ENCODE measurements at regions of chr20 and their contacts with region 1.

Region 1: GRCh38 chr20:25247956-25248785 is at the start of gene PYGB:
- DNase-seq: peak in 1 of 2 experiments; percentile 41
- H3K4me3 ChIP-seq: peak within 1 kb of the TSS; percentile 73 to 83 (median 77)
- H3K27ac ChIP-seq: peak within 1 kb of the TSS; percentile 56; the same call in 1 of the 2 replicates
- H3K4me1 ChIP-seq: peaks cover 3 to 7% (median 4%) of the 10 kb centered on the region in 4 experiments; a peak in 6 of 7 replicates
- H3K27me3 ChIP-seq: peaks cover 0 to 8% (median 7%) of the 10 kb centered on the region in 4 experiments; a peak in 4 of 7 replicates
- CTCF ChIP-seq: no peak
- EP300 ChIP-seq: 0 out of 3 replicates have a peak, but pooled peaks of 1 of the 2 experiments have one; percentile 10
- POLR2A ChIP-seq: peak in 1 of 2 experiments; percentile 90; a peak in 2 of 3 replicates
- RAD21 ChIP-seq: no peak
- total RNA-seq, gene PYGB: 54.9 and 56.0 TPM in 2 replicates

Region 2: GRCh38 chr20:25120462-25120861 is 127.7 kb before region 1 on chr20:
- CTCF ChIA-PET with region 1: no interaction called
- POLR2A ChIA-PET with region 1: no interaction called
- DNase-seq: peak in 1 of 2 experiments; percentile 14
- H3K4me3 ChIP-seq: no peak overlapping the region
- H3K27ac ChIP-seq: no peak overlapping the region
- H3K4me1 ChIP-seq: no peaks in the 10 kb centered on the region
- H3K27me3 ChIP-seq: no peaks in the 10 kb centered on the region
- CTCF ChIP-seq: no peak
- EP300 ChIP-seq: no peak
- POLR2A ChIP-seq: no peak
- RAD21 ChIP-seq: no peak

Region 3: GRCh38 chr20:25198663-25199365 is 49.4 kb before region 1 on chr20:
- CTCF ChIA-PET with region 1: interaction called, 10 read pairs
- POLR2A ChIA-PET with region 1: interaction called, 3 read pairs
- DNase-seq: no peak
- H3K4me3 ChIP-seq: no peak overlapping the region
- H3K27ac ChIP-seq: no peak overlapping the region
- H3K4me1 ChIP-seq: peaks cover 4 to 12% (median 10%) of the 10 kb centered on the region in 4 experiments
- H3K27me3 ChIP-seq: peaks cover 0 to 6% (median under 1%) of the 10 kb centered on the region in 4 experiments; a peak in 3 of 7 replicates
- CTCF ChIP-seq: no peak
- EP300 ChIP-seq: no peak
- POLR2A ChIP-seq: no peak
- RAD21 ChIP-seq: no peak

Region 4: DNA sequence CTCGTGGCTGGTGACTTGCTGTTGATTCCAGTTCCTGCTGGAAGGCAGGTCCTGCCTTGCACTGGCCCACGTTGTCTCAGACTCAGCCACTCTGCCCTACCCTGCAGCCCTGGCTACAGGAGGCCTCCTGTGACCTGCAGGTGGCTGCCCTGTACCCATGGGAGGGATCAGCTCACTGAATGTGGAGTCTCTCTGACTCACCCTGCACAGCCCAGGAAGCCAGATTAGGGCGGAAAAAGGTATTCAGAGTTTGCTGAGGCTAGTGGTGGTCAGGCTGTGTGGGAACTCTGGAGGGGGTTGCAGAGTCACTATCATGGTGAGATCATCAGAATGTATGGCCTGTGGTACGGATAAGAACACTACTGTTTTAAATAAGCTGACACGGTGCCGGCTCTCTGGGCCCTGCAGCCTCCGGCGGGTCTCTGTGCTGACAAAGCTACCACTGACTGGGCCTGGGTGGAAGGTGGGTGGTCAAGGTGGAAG is 25.0 kb before region 1 on chr20:
- CTCF ChIA-PET with region 1: interaction called, 24 read pairs
- POLR2A ChIA-PET with region 1: interaction called, 5 read pairs
- DNase-seq: peak in 1 of 2 experiments; percentile 36
- H3K4me3 ChIP-seq: no peak overlapping the region
- H3K27ac ChIP-seq: peak overlapping the region; percentile 38; the same call in 1 of the 2 replicates
- H3K4me1 ChIP-seq: peaks cover 0 to 5% (median 2%) of the 10 kb centered on the region in 4 experiments; a peak in 2 of 7 replicates
- H3K27me3 ChIP-seq: no peaks in the 10 kb centered on the region
- CTCF ChIP-seq: peak in 1 of 3 experiments; percentile 7; a peak in 1 of 4 replicates
- EP300 ChIP-seq: no peak
- POLR2A ChIP-seq: no peak
- RAD21 ChIP-seq: no peak; a peak in 1 of 4 replicates

Region 5: GRCh38 chr20:25230166-25230831 is 17.9 kb before region 1 on chr20:
- CTCF ChIA-PET with region 1: interaction called, 24 read pairs
- POLR2A ChIA-PET with region 1: interaction called, 5 read pairs
- DNase-seq: no peak
- H3K4me3 ChIP-seq: no peak overlapping the region
- H3K27ac ChIP-seq: no peak overlapping the region
- H3K4me1 ChIP-seq: no peaks in the 10 kb centered on the region
- H3K27me3 ChIP-seq: no peaks in the 10 kb centered on the region
- CTCF ChIP-seq: no peak
- EP300 ChIP-seq: no peak
- POLR2A ChIP-seq: no peak
- RAD21 ChIP-seq: no peak

Region 6: DNA sequence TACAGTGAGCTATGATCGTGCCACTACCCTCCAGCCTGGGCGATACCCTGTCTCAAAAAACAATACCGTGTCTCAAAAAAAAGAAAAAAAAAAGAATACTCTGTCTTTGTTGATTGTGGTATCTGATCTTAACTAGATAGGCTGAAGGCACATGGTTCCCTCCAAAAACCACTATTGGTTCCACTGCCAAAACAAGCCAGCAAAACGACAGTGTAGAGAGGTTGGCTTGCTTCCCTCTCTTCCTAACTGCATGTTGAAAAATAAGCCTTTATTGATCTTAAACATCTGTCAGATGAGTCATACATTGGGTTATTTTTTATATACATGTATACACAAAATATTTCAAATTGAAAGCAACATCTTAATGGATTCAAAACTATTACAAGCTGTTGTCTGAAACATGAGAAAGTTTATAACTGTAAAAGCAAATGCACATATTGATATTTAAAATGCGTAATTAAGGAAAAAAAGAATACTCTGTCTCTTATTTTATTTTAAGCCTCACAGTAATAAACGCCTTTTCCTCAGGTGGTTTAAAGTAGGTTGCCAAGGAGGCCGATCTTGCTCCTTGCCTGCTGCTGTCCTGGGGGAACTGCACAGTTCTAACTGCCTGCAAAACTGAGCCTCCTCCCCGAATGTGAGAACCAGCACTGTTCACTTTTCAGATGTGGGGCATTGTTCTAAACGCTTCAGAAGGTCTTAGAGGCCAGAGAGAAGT is 344.1 kb after region 1 on chr20:
- CTCF ChIA-PET with region 1: no interaction called
- POLR2A ChIA-PET with region 1: no interaction called
- DNase-seq: no peak
- H3K4me3 ChIP-seq: no peak overlapping the region
- H3K27ac ChIP-seq: no peak overlapping the region
- H3K4me1 ChIP-seq: no peaks in the 10 kb centered on the region
- H3K27me3 ChIP-seq: no peaks in the 10 kb centered on the region
- CTCF ChIP-seq: no peak
- EP300 ChIP-seq: no peak
- POLR2A ChIP-seq: no peak
- RAD21 ChIP-seq: no peak

Measured in H1 (cell line).